Natural killer cell (primary cell): ENCODE measurements at regions of chr16 and their contacts with region 1.

Region 1: GRCh38 chr16:21560462-21560861 is 38.9 kb upstream of the METTL9 start:
- DNase-seq: no peak
- ATAC-seq: no peak
- H3K4me3 ChIP-seq: no peak overlapping the region
- H3K4me3 Mint-ChIP-seq: no peak overlapping the region
- H3K27ac ChIP-seq: no peak overlapping the region
- H3K27ac Mint-ChIP-seq: no peak overlapping the region
- H3K4me1 ChIP-seq: peaks cover 1% of the 10 kb centered on the region
- H3K4me1 Mint-ChIP-seq: peaks cover 0 to under 1% of the 10 kb centered on the region in 2 donors
- H3K27me3 ChIP-seq: no peaks in the 10 kb centered on the region
- H3K27me3 Mint-ChIP-seq: peaks cover 7% of the 10 kb centered on the region in 2 donors
- CTCF ChIP-seq: no peak

Region 2: GRCh38 chr16:21526923-21527807 is 33.3 kb before region 1 on chr16:
- intact Hi-C with region 1: loop called (anchors 5 kb)
- DNase-seq: no peak
- ATAC-seq: no peak
- H3K4me3 ChIP-seq: no peak overlapping the region
- H3K4me3 Mint-ChIP-seq: no peak overlapping the region
- H3K27ac ChIP-seq: no peak overlapping the region
- H3K27ac Mint-ChIP-seq: no peak overlapping the region
- H3K4me1 ChIP-seq: no peaks in the 10 kb centered on the region
- H3K4me1 Mint-ChIP-seq: no peaks in the 10 kb centered on the region
- H3K27me3 ChIP-seq: no peaks in the 10 kb centered on the region
- H3K27me3 Mint-ChIP-seq: peaks cover 6 to 15% of the 10 kb centered on the region in 2 donors
- CTCF ChIP-seq: no peak